Heart right ventricle (tissue), 16 donors: ENCODE measurements at regions of chr1 and their contacts with region 1.

Region 1: DNA sequence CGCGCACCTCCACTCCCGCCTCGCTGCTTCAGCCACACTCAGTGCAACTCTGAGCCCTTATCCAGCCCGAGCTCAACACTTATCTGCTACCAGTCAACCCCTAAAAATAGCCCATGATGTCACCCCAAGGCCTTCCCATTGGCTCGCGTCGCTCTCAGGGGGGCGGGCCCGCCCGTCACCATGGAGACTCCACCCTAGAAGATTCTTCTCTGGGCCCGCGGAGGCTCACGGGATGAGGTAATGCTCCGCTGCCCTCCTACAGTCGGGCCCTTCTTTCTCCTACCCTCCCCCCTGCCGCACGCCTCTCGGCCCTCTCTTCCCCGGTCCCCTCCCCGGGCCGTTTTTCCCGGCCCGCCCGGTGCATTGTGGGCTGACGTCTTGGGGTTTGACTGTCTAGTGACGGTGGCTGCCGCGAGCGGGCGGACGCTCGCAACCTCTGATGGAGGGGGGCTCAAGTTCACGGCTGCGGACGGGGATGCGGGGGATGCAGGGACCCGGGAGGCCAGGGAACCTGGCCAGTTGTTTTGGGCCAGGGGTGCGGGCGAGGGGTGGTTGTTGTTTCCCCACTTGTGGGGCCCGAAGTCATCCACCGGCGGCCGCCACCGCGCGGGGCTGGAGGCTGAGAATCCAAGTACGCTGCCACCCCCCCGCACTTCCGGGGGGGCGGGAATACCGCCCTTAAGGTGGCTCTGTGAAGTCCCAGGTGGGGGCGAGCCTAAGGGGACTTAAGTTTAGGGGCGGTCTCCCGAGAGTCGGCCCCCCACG is at the start of gene JUN:
- DNase-seq: peak; percentile 99 to 100
- ATAC-seq: peak; percentile 85 to 95 (median 89)
- H3K4me3 ChIP-seq: peak within 1 kb of the TSS; percentile 74 to 97 (median 94)
- H3K27ac ChIP-seq: peak within 1 kb of the TSS; percentile 98 to 100 (median 100)
- H3K4me1 ChIP-seq: peaks cover 0 to 33% (median 22%) of the 10 kb centered on the region in 9 donors
- H3K27me3 ChIP-seq: no peaks in the 10 kb centered on the region
- CTCF ChIP-seq: peak in 3 of 9 donors; percentile 32 to 37 (median 34)
- total RNA-seq, gene JUN: 47.0 to 209 (median 78.8) TPM

Region 2: GRCh38 chr1:58903514-58904298 is 119.5 kb after region 1 on chr1:
- intact Hi-C with region 1: loop called in 5 of 10 experiments (anchors 1 to 5 kb)
- DNase-seq: peak; percentile 95 to 96
- ATAC-seq: peak; percentile 93 to 99 (median 96)
- H3K4me3 ChIP-seq: peak overlapping the region in 9 of 10 donors; percentile 35 to 67 (median 58)
- H3K27ac ChIP-seq: peak overlapping the region; percentile 90 to 99 (median 96)
- H3K4me1 ChIP-seq: peaks cover 5 to 43% (median 27%) of the 10 kb centered on the region in 9 donors
- H3K27me3 ChIP-seq: no peaks in the 10 kb centered on the region
- CTCF ChIP-seq: peak in 3 of 9 donors; percentile 6 to 7 (median 6)

Region 3: DNA sequence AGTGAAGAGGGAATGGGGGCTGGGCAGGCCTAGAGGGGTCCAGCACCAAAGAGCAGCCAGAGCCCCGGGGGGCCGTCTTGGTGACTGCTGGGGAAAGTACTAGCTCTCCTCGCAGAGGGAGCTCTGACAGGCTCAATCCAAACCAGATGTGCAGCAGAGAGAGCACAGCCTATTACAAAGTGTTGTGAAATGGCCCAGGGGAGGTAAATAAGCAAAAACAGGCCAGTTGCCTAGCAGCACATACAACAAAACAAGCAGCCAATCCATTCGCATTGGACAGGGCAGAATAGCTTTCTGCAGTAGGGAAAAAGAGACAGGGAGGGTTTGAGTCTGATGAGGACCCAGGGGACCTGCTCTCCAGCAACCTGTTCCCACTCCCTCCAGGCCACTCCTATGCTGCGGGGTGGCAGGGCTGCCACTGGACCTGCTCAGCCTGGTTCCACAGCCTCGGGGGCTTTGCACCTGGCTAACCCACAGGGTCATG is 273.1 kb after region 1 on chr1:
- intact Hi-C with region 1: loop called in 5 of 10 experiments (anchors 2 to 10 kb)
- DNase-seq: peak; percentile 80 to 87
- ATAC-seq: peak; percentile 89 to 93 (median 90)
- H3K4me3 ChIP-seq: no peak overlapping the region
- H3K27ac ChIP-seq: peak overlapping the region in 9 of 10 donors; percentile 6 to 66 (median 60)
- H3K4me1 ChIP-seq: peaks cover 7 to 37% (median 31%) of the 10 kb centered on the region in 9 donors
- H3K27me3 ChIP-seq: no peaks in the 10 kb centered on the region
- CTCF ChIP-seq: peak in 2 of 9 donors; percentile 30 to 32

Region 4: DNA sequence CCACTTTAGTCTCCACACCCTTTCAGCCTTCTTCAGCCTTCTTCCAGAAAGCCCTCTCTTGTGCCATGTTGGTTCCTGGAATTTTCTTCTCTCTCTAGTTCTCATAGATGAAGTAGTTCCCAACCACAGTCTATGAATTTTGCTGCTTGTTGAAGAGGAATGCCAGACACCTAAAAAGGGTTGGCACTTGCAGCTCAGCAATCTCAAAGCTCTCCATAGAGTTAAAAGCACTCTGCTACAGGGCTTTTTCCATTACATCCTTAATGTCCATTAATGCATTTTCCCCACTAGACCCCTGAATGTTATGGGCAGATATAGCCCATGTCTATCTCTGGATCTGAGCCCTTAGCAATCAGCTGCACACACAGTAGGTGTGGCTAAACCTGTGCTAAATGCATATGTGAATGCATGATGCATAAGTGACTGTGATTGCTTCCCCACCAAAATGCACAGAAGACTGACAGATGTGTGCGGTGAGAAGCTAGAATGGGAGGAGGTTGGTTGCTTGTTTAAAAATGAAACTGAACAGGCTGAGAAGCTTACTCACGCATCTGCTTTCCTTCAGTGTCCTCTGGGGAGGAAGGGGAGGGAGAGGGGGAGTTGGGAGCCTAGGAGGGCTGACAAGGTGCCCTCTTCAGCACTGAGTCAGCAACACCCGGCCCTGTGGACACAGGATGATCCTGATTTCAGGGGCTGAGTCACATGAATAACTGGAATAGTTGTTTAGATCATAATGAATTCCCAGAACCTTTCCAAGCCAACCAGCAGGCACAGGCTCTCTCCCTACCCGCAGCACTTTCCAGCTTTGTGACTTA is 366.6 kb after region 1 on chr1:
- intact Hi-C with region 1: loop called in 6 of 10 experiments (anchors 2 to 10 kb)
- DNase-seq: peak; percentile 67 to 86
- ATAC-seq: peak; percentile 85 to 98 (median 94)
- H3K4me3 ChIP-seq: peak overlapping the region in 6 of 10 donors; percentile 1 to 39 (median 21)
- H3K27ac ChIP-seq: peak overlapping the region; percentile 49 to 89 (median 78)
- H3K4me1 ChIP-seq: peaks cover 9 to 44% (median 36%) of the 10 kb centered on the region in 9 donors
- H3K27me3 ChIP-seq: no peaks in the 10 kb centered on the region
- CTCF ChIP-seq: no peak

Region 5: DNA sequence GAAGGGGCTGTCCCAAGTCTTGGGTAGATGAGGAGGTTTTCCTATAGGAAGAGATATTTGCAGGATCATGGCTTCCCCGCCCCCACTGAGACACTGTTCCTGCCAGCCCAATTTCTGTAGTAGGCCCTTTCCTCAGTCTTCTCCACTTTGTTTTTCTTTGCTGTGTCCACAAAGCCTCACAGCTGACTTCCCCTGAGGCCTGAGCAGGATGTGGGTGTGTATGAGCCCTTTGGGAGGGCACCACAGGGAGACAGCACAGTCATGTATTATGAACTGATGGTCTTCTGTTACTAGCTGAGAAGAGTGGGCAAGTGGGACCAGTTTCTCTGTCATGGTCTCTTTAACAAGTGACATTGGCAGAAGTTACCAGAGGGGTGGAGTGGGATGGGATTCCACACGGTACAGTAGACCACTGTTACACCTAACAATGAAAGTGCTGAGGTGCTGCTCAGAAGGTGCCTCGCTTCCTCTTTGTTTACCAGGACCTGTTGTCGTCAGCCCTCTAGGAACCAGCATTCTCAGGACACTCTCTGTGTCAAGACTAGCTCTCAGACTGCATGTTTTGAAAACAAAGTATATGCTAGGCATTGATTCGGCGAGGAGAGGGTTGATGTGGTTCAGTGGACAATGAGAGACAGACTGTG is 776.8 kb after region 1 on chr1:
- intact Hi-C with region 1: loop called in 1 of 10 experiments (anchors 10 kb)
- DNase-seq: no peak
- ATAC-seq: no peak
- H3K4me3 ChIP-seq: no peak overlapping the region
- H3K27ac ChIP-seq: no peak overlapping the region
- H3K4me1 ChIP-seq: peaks cover 0 to 8% (median 0%) of the 10 kb centered on the region in 9 donors
- H3K27me3 ChIP-seq: no peaks in the 10 kb centered on the region
- CTCF ChIP-seq: no peak

Region 6: GRCh38 chr1:59759156-59759925 is 975.2 kb after region 1 on chr1:
- intact Hi-C with region 1: loop called in 1 of 10 experiments (anchors 5 kb)
- DNase-seq: peak; percentile 76 to 79
- ATAC-seq: peak; percentile 92 to 96 (median 94)
- H3K4me3 ChIP-seq: peak overlapping the region in 9 of 10 donors; percentile 14 to 42 (median 29)
- H3K27ac ChIP-seq: peak overlapping the region in 9 of 10 donors; percentile 13 to 75 (median 55)
- H3K4me1 ChIP-seq: peaks cover 0 to 16% (median 7%) of the 10 kb centered on the region in 9 donors
- H3K27me3 ChIP-seq: no peaks in the 10 kb centered on the region
- CTCF ChIP-seq: peak; percentile 92 to 99 (median 96)